CD8-positive, alpha-beta T cell (primary cell): ENCODE measurements at regions of chr15 and their contacts with region 1.

Region 1: GRCh38 chr15:81311752-81312464 is 12.0 kb downstream of the STARD5 start:
- DNase-seq: peak in 1 of 9 experiments; percentile 37
- ATAC-seq: peak; percentile 43
- H3K4me3 ChIP-seq: no peak overlapping the region
- H3K4me3 Mint-ChIP-seq: peak overlapping the region; percentile 20
- H3K27ac ChIP-seq: peak overlapping the region; percentile 4 to 39
- H3K27ac Mint-ChIP-seq: peak overlapping the region; percentile 91
- H3K4me1 ChIP-seq: peaks cover 70% of the 10 kb centered on the region
- H3K4me1 Mint-ChIP-seq: peaks cover 86% of the 10 kb centered on the region
- H3K27me3 ChIP-seq: no peaks in the 10 kb centered on the region
- H3K27me3 Mint-ChIP-seq: no peaks in the 10 kb centered on the region
- CTCF ChIP-seq: no peak

Region 2: GRCh38 chr15:81280721-81281455 is 31.0 kb before region 1 on chr15:
- CTCF ChIA-PET with region 1: interaction called, 498 read pairs
- POLR2A ChIA-PET with region 1: interaction called, 24 read pairs
- intact Hi-C with region 1: no loop called
- DNase-seq: no peak
- ATAC-seq: no peak
- H3K4me3 ChIP-seq: no peak overlapping the region
- H3K4me3 Mint-ChIP-seq: no peak overlapping the region
- H3K27ac ChIP-seq: no peak overlapping the region
- H3K27ac Mint-ChIP-seq: peak overlapping the region; percentile 45
- H3K4me1 ChIP-seq: peaks cover 62% of the 10 kb centered on the region
- H3K4me1 Mint-ChIP-seq: peaks cover 75% of the 10 kb centered on the region
- H3K27me3 ChIP-seq: no peaks in the 10 kb centered on the region
- H3K27me3 Mint-ChIP-seq: no peaks in the 10 kb centered on the region
- CTCF ChIP-seq: no peak

Region 3: GRCh38 chr15:81286621-81287121 is 25.2 kb before region 1 on chr15:
- CTCF ChIA-PET with region 1: interaction called, 498 read pairs
- POLR2A ChIA-PET with region 1: interaction called, 330 read pairs
- intact Hi-C with region 1: no loop called
- DNase-seq: peak in 3 of 9 experiments; percentile 35 to 75 (median 53)
- ATAC-seq: peak; percentile 93
- H3K4me3 ChIP-seq: peak overlapping the region in 1 of 2 experiments; percentile 36
- H3K4me3 Mint-ChIP-seq: peak overlapping the region; percentile 75
- H3K27ac ChIP-seq: peak overlapping the region; percentile 48 to 88
- H3K27ac Mint-ChIP-seq: peak overlapping the region; percentile 98
- H3K4me1 ChIP-seq: peaks cover 83% of the 10 kb centered on the region
- H3K4me1 Mint-ChIP-seq: peaks cover 81% of the 10 kb centered on the region
- H3K27me3 ChIP-seq: no peaks in the 10 kb centered on the region
- H3K27me3 Mint-ChIP-seq: no peaks in the 10 kb centered on the region
- CTCF ChIP-seq: no peak

Region 4: DNA sequence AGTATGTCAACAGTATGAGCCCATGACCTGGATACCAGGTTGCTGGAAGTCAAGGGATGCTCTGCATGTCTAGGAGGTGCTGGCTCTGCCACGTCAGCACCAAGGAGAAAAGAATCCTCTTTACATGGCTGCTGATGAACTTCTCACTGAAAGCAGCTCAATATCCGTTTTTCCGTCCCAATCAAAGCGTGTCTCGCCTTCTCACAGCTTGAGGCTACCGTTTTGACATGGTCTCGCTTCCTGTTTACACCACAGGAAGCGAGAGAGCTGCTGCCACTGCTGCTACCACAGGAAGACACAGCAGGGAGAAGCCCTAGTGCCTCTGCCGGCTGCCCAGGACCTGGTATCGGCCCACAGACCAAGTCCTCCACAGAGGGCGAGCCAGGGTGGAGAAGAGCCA is 15.2 kb before region 1 on chr15:
- CTCF ChIA-PET with region 1: interaction called, 10 read pairs
- POLR2A ChIA-PET with region 1: interaction called, 330 read pairs
- intact Hi-C with region 1: loop called in 1 of 2 experiments (anchors 2 kb)
- DNase-seq: peak; percentile 50 to 94 (median 79)
- ATAC-seq: peak; percentile 46
- H3K4me3 ChIP-seq: peak overlapping the region; percentile 88 to 89
- H3K4me3 Mint-ChIP-seq: peak overlapping the region; percentile 92
- H3K27ac ChIP-seq: peak overlapping the region; percentile 84 to 92
- H3K27ac Mint-ChIP-seq: peak overlapping the region; percentile 98
- H3K4me1 ChIP-seq: peaks cover 55% of the 10 kb centered on the region
- H3K4me1 Mint-ChIP-seq: peaks cover 72% of the 10 kb centered on the region
- H3K27me3 ChIP-seq: no peaks in the 10 kb centered on the region
- H3K27me3 Mint-ChIP-seq: no peaks in the 10 kb centered on the region
- CTCF ChIP-seq: no peak

Region 5: DNA sequence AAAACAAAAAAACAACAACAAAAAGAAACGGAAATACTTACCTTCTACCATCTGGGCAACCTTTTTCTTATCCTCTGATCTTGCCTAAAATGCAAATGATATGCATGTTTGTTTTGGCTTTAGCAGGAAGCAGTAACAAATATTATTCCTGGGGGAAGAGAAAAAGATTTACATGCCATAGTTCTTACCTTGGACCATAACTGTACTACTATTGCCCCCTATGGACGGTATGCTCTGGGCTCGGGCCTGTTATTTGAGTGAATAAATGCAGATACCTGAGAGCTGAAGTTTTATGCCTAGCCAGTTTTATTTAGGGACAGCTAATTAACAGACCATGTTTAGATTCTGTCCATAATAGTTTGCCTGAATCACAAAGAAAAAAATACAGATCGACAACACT is 24.7 kb after region 1 on chr15:
- CTCF ChIA-PET with region 1: interaction called, 12 read pairs
- POLR2A ChIA-PET with region 1: interaction called, 4 read pairs
- intact Hi-C with region 1: no loop called
- DNase-seq: peak in 7 of 9 experiments; percentile 28 to 69 (median 46)
- ATAC-seq: peak; percentile 49
- H3K4me3 ChIP-seq: no peak overlapping the region
- H3K4me3 Mint-ChIP-seq: no peak overlapping the region
- H3K27ac ChIP-seq: no peak overlapping the region
- H3K27ac Mint-ChIP-seq: no peak overlapping the region
- H3K4me1 ChIP-seq: no peaks in the 10 kb centered on the region
- H3K4me1 Mint-ChIP-seq: peaks cover 15% of the 10 kb centered on the region
- H3K27me3 ChIP-seq: no peaks in the 10 kb centered on the region
- H3K27me3 Mint-ChIP-seq: no peaks in the 10 kb centered on the region
- CTCF ChIP-seq: peak; percentile 37